ENCODE measurements at regions of chr5 and their contacts with region 1.

Region 1: DNA sequence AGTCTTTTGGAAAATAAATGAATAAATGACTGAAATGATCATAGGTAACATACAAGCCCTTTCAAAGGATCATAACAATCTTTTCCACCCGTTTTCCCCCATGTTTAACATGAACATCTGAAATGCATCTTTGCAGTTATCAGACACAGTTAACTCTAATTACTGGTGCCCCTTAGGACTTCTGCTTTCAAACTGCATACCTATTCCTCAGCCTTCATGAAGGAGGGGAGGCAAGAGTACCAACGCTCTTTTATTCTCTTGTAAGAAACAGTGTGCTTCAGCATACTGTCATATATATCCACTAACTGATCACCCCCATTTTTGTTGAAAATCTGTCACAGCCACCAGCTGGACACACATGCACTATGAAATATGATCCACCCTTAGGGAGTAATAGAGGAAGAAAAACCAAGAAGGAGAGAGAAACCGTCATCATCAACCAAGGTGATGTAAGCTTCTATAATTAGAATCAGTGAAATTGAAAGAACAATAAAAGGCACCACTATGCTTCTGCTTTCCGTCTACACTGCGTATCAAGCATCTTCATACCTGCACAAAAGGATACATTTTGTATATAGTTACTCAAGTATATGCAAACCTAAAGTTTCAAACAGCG is 98.7 kb downstream of the RAPGEF6 start:
- DNase-seq: peak; percentile 39
- H3K4me3 Mint-ChIP-seq: peak overlapping the region; percentile 49
- H3K27ac Mint-ChIP-seq: peak overlapping the region; percentile 80
- H3K4me1 Mint-ChIP-seq: peaks cover 81% of the 10 kb centered on the region
- H3K27me3 Mint-ChIP-seq: no peaks in the 10 kb centered on the region

Region 2: DNA sequence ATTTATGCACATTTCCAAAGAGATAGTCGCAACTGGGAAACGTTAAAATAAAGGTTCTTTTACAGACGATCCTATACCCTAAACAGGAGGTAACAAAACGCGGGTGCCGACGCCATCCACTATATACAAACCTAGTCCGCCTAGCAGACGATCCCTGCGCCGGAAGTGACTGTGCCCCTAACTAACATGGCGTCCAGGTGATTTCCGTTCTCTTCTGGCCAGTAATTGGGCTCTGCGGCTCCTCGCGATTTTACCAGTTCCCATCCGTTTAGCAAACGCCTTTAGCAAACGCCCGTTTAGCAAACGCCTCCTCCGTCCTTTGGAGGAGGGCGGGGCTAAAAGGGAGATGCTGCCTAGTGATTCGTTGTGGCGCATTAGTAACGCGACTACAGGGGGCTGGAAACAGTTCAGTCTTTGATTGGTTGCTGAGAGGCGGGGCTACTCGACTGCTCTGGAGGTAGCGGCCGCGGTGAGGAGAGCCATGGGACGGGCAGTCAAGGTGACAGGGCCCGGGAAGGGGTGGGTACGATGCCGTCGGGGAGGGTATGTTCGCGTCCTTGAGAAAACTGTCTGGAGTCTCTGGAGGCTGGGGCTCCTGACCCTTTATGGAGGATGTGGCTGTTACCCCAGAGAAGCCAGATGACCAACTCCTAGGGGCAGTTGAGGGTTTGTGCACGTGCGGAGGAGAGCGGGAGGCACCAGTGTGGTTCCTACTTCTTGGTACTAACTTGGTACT is 365.6 kb before region 1 on chr5 and contains the start of gene LYRM7:
- CTCF ChIA-PET with region 1: no interaction called
- intact Hi-C with region 1: loop called (anchors 5 kb)
- DNase-seq: peak; percentile 98
- H3K4me3 Mint-ChIP-seq: peak within 1 kb of the TSS; percentile 99
- H3K27ac Mint-ChIP-seq: peak within 1 kb of the TSS; percentile 92
- H3K4me1 Mint-ChIP-seq: peaks cover 44% of the 10 kb centered on the region
- H3K27me3 Mint-ChIP-seq: no peaks in the 10 kb centered on the region
- total RNA-seq, gene LYRM7: 14.6 to 15.0 TPM

Region 3: DNA sequence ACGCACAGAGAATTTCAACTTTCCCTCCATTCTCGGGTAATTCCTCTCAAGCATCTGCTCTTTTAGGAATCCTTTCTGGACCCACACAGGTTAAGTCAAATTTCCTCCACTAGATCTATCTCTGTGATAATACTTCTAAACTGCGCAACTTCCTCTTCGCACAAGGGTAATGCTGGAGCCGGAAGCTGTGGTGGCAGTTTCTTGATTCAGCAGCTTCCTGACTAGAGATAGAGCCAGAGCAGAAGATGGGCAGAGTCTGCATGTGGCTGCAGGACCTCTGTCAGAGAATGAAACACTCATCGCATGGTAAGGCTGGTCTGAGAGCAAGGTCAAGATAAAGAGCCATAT is 283.5 kb before region 1 on chr5:
- CTCF ChIA-PET with region 1: no interaction called
- intact Hi-C with region 1: loop called (anchors 2 kb)
- DNase-seq: peak; percentile 88
- H3K4me3 Mint-ChIP-seq: peak overlapping the region; percentile 94
- H3K27ac Mint-ChIP-seq: peak overlapping the region; percentile 95
- H3K4me1 Mint-ChIP-seq: peaks cover 72% of the 10 kb centered on the region
- H3K27me3 Mint-ChIP-seq: no peaks in the 10 kb centered on the region

Region 4: DNA sequence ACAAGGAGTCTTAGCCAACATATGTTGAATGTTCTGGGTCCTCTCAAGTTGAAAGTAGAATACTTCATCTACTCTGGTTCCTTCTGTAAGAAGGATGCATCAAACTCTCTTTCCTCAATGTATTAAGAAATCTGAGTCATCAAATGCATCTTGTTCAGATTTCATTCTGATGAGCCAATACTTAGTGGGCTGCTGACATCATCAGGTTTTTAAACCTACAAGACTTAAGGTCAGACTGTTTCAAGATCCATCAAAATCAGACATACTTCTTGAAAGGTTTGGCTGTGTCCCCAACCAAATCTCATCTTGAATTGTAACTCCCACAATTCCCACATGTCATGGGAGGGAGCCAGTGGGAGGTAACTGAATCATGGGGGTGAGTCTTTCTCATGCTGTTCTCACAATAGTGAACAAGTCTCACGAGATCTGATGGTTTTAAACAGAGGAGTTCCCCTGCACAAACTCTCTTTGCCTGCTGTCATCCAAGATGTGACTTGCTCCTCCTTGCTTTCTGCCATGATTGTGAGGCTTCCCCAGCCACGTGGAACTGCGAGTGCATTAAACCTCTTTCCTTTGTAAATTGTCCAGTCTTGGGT is 70.0 kb before region 1 on chr5:
- CTCF ChIA-PET with region 1: interaction called, 4 read pairs
- intact Hi-C with region 1: loop called (anchors 2 kb)
- DNase-seq: peak; percentile 27
- H3K4me3 Mint-ChIP-seq: no peak overlapping the region
- H3K27ac Mint-ChIP-seq: peak overlapping the region; percentile 68
- H3K4me1 Mint-ChIP-seq: peaks cover 48% of the 10 kb centered on the region
- H3K27me3 Mint-ChIP-seq: no peaks in the 10 kb centered on the region

Region 5: GRCh38 chr5:131514316-131515283 is 21.7 kb before region 1 on chr5:
- CTCF ChIA-PET with region 1: interaction called, 3 read pairs
- intact Hi-C with region 1: loop called (anchors 1 kb)
- DNase-seq: peak; percentile 32
- H3K4me3 Mint-ChIP-seq: peak overlapping the region; percentile 58
- H3K27ac Mint-ChIP-seq: peak overlapping the region; percentile 51
- H3K4me1 Mint-ChIP-seq: peaks cover 57% of the 10 kb centered on the region
- H3K27me3 Mint-ChIP-seq: no peaks in the 10 kb centered on the region

Region 6: GRCh38 chr5:131640043-131640856 is 103.9 kb after region 1 on chr5:
- CTCF ChIA-PET with region 1: no interaction called
- intact Hi-C with region 1: loop called (anchors 1 kb)
- DNase-seq: peak; percentile 90
- H3K4me3 Mint-ChIP-seq: peak overlapping the region; percentile 59
- H3K27ac Mint-ChIP-seq: peak overlapping the region; percentile 94
- H3K4me1 Mint-ChIP-seq: peaks cover 29% of the 10 kb centered on the region
- H3K27me3 Mint-ChIP-seq: no peaks in the 10 kb centered on the region

Region 7: DNA sequence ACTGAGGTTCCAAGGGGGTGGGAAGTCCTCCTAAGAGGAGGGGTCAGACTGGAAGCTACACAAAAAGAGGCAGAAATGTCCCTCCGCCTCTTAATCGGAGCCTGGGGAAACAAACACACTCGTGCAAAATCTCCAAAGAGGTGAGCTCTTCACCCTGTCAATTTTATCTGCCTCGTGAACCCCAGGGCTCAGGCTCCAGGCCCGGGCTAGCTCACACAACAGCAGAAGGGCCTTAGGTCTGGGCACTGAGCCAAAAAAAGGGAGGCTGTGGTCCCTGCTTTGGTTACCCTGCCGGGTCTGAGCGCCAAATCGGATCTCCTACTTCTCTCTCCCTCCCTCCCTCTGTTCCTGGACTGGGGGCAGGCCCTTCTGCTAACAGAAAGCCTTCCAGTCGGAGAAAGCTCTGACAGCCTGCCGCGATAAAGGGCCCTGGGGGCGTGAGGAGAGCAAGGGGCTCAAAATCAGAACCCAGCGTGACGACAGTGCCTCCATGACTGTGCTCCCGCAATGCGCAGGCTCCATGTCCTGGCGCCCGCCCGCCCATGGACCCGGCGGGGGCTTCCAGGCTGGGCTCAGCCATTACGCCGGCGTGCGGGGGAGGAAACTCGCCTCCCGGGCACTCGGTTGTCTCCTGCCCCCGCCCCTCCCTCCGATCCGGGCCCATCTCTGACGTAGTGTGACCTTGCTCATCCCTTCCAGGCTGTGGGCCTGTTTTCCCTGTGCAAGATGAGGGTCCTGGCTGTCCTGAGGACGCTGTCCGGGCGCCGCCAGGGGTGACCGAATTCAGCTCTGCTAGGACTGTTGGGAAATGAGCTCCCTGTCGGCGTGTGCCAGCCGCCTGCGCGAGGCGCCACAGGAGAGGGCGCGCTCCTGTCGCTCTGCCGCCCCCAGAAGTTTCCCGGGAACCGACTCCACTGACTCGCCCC is 757.0 kb after region 1 on chr5:
- CTCF ChIA-PET with region 1: no interaction called
- intact Hi-C with region 1: loop called (anchors 10 kb)
- DNase-seq: peak; percentile 92
- H3K4me3 Mint-ChIP-seq: peak overlapping the region; percentile 92
- H3K27ac Mint-ChIP-seq: peak overlapping the region; percentile 89
- H3K4me1 Mint-ChIP-seq: peaks cover 23% of the 10 kb centered on the region
- H3K27me3 Mint-ChIP-seq: peaks cover 14% of the 10 kb centered on the region

Measured in activated naive CD4-positive, alpha-beta T cell treated with anti-CD3 and anti-CD28 coated beads for 36 hours (primary cell).